ENCODE measurements at regions of chr1 and their contacts with region 1.

Region 1: DNA sequence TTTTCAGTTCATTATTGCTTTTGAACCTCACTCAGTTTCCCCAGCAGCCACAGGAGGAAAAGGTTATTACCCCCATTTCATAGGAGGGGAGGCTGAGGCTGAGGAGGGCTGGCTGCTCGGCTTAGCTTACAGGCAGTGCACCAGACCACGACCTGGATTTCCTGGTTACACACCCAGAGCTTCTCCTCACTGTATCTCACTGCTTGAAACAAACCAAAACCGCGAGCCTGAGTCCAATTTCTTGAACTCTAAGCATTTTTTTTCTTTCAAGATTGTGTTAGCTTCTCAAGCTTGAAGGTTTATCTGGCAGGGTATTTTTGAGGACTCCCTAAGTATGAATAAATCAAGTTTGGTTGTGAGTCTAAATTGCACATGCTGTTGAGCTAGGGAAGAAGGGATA is 188.9 kb upstream of the EDN2 start:
- DNase-seq: peak; percentile 81
- ATAC-seq: peak; percentile 95
- H3K4me3 Mint-ChIP-seq: peak overlapping the region; percentile 72
- H3K27ac Mint-ChIP-seq: peak overlapping the region; percentile 90
- H3K4me1 Mint-ChIP-seq: peaks cover 92% of the 10 kb centered on the region
- H3K27me3 Mint-ChIP-seq: no peaks in the 10 kb centered on the region

Region 2: DNA sequence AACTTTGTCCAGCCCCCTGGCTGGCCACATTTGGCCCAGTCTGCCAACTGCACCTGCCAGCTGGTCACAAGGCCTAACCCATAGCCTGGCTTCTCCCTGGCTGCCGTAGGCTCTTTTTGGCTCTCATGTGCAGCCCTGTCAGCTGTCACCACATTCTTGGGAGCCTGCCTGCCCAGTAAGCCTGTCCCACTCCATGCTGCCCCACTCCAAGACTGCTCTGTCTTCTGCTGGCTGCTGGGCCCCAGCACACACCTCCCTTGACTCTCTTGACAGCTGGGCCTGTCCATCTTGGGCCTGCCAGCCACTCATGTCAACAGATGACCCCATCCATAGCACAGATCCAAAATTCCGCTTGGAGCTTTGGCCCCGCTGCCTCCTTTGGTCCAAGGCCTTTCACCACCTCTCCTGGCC is 114.6 kb before region 1 on chr1:
- CTCF ChIA-PET with region 1: no interaction called
- POLR2A ChIA-PET with region 1: no interaction called
- DNase-seq: no peak
- ATAC-seq: no peak
- H3K4me3 Mint-ChIP-seq: no peak overlapping the region
- H3K27ac Mint-ChIP-seq: no peak overlapping the region
- H3K4me1 Mint-ChIP-seq: no peaks in the 10 kb centered on the region
- H3K27me3 Mint-ChIP-seq: no peaks in the 10 kb centered on the region

Region 3: GRCh38 chr1:41662061-41662764 is 11.2 kb before region 1 on chr1:
- CTCF ChIA-PET with region 1: interaction called, 7 read pairs
- POLR2A ChIA-PET with region 1: interaction called, 19 read pairs
- DNase-seq: peak; percentile 84
- ATAC-seq: peak; percentile 88
- H3K4me3 Mint-ChIP-seq: peak overlapping the region; percentile 47
- H3K27ac Mint-ChIP-seq: peak overlapping the region; percentile 21
- H3K4me1 Mint-ChIP-seq: peaks cover 82% of the 10 kb centered on the region
- H3K27me3 Mint-ChIP-seq: no peaks in the 10 kb centered on the region

Region 4: DNA sequence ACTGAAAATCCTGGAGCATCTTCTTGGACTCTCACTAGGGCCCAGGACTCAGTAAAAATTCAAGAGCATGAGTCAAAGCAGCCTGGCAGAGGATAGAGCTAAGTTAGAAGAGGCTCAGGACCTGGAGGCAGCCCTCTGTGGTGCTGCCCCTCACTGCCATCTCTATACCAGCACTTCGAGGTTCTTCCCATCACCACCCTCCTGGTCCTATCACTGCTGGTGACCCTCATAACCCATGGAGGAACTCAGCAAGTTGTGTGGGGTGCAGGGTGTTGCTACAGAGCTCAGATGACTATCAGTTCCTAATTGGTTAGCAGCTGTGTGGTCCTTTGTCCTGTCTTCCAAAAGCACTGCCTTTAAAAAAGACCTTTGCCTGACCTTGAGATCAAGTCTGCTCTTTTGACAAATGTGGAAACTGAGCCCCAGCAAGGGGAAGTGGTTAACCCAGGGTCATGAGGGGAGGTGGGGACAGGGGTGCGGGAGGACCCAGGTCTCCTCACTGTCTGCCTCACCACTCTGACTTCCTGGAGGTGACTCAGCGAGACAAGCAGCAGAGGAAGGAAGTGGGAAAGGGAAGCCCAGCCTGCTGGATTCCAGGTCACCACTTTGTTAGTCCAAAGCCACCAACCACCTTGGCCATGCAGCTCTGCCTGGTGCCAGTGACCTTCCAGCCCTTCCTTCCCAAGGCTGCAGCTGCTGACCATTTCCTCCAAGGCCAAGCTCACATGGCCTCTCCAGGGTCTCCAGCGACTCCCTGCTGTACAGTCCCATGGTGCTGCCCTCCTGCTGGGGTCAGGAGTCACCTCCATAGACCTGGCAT is 10.5 kb after region 1 on chr1:
- CTCF ChIA-PET with region 1: interaction called, 23 read pairs
- POLR2A ChIA-PET with region 1: interaction called, 15 read pairs
- DNase-seq: peak; percentile 66
- ATAC-seq: peak; percentile 66
- H3K4me3 Mint-ChIP-seq: peak overlapping the region; percentile 44
- H3K27ac Mint-ChIP-seq: peak overlapping the region; percentile 86
- H3K4me1 Mint-ChIP-seq: peaks cover 97% of the 10 kb centered on the region
- H3K27me3 Mint-ChIP-seq: no peaks in the 10 kb centered on the region

Region 5: GRCh38 chr1:41728403-41729202 is 55.2 kb after region 1 on chr1:
- CTCF ChIA-PET with region 1: interaction called, 15 read pairs
- POLR2A ChIA-PET with region 1: interaction called, 3 read pairs
- DNase-seq: peak; percentile 57
- ATAC-seq: peak; percentile 55
- H3K4me3 Mint-ChIP-seq: no peak overlapping the region
- H3K27ac Mint-ChIP-seq: peak overlapping the region; percentile 54
- H3K4me1 Mint-ChIP-seq: peaks cover 36% of the 10 kb centered on the region
- H3K27me3 Mint-ChIP-seq: no peaks in the 10 kb centered on the region

Measured in activated CD8-positive, alpha-beta T cell treated with anti-CD3 and anti-CD28 coated beads, Interleukin-2, amount 10 ng/mL, durations not matched to agents 7 days and 5 days (primary cell).